Activated T-helper 2 cell treated with anti-CD3 and anti-CD28 coated beads, Interferon-gamma antibody, Interleukin-2, Interleukin-4, amounts not matched to agents 10 μg/mL and 5 μg/mL and 100 μg/mL, durations not matched to agents 14 hours and 24 hours and 36 hours (primary cell): ENCODE measurements at regions of chr6 and their contacts with region 1.

Region 1: DNA sequence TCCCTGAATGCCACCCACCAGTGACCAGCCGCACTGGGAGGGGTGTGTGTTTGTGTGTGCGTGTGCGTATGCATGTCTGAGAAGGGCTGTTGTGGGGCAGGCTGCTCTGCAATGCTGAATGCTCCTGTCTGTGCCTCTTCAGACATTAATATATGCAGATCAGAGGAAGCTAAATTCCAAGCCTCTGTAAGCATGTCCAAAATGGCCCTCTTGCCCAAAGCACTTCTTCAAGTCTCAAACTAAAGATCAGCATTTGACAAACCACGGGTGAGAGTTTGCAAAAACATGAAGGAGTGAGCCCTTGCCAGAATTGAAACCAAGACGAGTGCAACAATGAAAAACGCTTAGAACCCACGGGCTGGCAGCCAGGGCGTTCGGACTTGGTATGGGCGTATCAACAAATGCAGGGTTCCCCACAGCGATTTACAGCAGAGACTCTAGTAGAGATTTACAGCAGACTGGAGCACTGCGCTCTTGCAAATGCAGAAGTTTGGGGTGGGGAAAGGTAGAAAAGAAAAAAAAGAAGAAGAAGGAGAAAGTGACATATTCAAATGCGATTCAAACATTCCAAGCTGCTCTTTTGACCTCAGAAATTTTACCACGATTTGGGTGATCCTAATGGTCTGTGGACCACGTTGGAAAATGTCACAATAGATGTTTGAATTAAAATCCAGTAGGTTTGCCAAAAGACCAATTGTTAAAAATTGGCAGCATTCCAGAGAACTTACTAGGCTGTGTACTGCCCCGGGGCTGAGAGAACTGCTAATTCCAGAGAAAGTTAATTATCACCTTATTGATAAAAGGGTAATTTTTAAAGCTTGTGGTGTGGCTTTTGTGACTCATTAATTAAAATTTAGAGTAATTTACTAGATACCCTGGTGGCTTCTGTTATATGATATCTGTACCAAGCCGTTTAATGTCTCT is 3.5 kb downstream of the SCML4 start:
- DNase-seq: peak; percentile 26
- H3K4me3 Mint-ChIP-seq: peak overlapping the region; percentile 84
- H3K27ac Mint-ChIP-seq: peak overlapping the region; percentile 86
- H3K4me1 Mint-ChIP-seq: peaks cover 75% of the 10 kb centered on the region
- H3K27me3 Mint-ChIP-seq: no peaks in the 10 kb centered on the region

Region 2: GRCh38 chr6:107585815-107586435 is 234.7 kb before region 1 on chr6:
- intact Hi-C with region 1: no loop called
- DNase-seq: no peak
- H3K4me3 Mint-ChIP-seq: no peak overlapping the region
- H3K27ac Mint-ChIP-seq: no peak overlapping the region
- H3K4me1 Mint-ChIP-seq: no peaks in the 10 kb centered on the region
- H3K27me3 Mint-ChIP-seq: peaks cover 65% of the 10 kb centered on the region

Region 3: GRCh38 chr6:107645800-107646575 is 174.6 kb before region 1 on chr6:
- intact Hi-C with region 1: no loop called
- DNase-seq: no peak
- H3K4me3 Mint-ChIP-seq: no peak overlapping the region
- H3K27ac Mint-ChIP-seq: no peak overlapping the region
- H3K4me1 Mint-ChIP-seq: no peaks in the 10 kb centered on the region
- H3K27me3 Mint-ChIP-seq: peaks cover 30% of the 10 kb centered on the region

Region 4: DNA sequence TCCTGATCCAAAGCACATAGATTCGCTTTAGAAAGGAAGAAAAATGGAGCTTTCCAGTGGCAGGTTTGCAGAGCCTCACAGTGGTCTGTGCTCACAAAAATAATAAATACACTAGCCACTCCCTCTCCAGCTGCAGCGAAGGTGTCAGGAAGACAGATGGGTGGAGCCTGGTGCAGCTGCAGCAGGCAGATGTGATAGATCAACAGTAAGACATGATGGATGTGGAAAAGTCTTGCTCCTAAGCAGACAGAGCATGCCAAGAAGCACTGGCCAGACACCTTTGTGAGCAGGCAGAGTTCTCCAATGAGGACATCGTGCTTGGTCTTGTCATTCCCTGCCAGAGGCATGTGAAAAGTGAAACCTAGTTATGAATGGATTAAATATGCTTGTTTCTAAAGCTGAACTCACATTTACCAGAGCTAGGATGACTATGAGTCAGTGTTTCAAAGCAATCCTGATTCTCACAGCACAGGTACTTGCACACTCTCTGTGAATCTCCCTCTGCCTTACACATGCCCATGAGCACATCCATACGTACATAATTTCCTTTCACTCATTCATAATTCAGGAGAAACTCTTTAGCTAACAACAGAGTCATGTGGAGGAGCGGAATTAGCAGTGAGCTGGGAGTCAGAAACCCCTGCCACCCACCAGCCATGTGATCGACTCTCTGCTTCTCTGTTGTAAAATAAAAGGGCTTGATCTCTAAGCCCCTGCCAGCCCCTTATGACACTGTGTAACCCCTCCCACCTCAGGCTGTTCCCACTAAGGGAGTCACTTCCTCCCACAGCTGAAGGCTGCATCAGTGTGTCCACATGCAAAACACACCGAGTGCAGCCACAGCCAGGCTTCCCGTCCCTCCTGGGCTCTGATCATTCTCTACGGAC is 107.7 kb before region 1 on chr6:
- intact Hi-C with region 1: loop called (anchors 2 kb)
- DNase-seq: no peak
- H3K4me3 Mint-ChIP-seq: peak overlapping the region; percentile 34
- H3K27ac Mint-ChIP-seq: peak overlapping the region; percentile 64
- H3K4me1 Mint-ChIP-seq: peaks cover 43% of the 10 kb centered on the region
- H3K27me3 Mint-ChIP-seq: peaks cover 13% of the 10 kb centered on the region

Region 5: DNA sequence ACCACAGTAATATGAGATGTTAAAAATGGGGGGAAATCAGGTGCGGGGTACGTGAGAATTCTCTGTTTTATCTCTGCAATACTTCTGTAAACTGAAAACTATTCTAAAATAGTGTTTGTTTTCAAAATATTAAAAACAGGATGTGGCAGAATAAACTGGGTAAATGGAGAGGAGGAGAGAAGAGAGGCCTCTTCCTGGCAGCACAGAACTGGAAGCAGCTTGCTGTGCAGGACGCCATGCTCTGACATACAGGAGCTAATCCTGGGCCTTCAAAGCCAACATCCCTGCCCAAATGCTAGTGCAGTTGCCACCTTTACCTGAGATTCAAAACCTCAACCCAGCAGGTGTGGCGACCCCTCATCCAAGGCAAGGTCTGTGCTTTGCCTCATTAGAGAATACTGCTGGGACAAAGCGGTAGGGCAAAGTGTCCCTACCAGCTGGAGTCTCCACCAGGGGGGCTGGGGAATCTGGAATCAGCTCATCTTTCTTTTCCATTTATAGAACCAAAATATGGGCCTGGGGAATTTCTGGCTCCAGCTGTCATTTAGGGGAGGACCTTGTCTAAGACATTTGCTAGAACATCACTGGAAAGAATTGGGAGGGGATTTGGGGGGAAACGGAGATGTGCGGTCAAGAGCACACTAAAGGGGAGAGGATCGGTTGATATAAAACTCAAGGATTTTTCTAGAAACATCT is 63.8 kb before region 1 on chr6:
- intact Hi-C with region 1: no loop called
- DNase-seq: no peak
- H3K4me3 Mint-ChIP-seq: no peak overlapping the region
- H3K27ac Mint-ChIP-seq: no peak overlapping the region
- H3K4me1 Mint-ChIP-seq: peaks cover 22% of the 10 kb centered on the region
- H3K27me3 Mint-ChIP-seq: peaks cover 13% of the 10 kb centered on the region

Region 6: DNA sequence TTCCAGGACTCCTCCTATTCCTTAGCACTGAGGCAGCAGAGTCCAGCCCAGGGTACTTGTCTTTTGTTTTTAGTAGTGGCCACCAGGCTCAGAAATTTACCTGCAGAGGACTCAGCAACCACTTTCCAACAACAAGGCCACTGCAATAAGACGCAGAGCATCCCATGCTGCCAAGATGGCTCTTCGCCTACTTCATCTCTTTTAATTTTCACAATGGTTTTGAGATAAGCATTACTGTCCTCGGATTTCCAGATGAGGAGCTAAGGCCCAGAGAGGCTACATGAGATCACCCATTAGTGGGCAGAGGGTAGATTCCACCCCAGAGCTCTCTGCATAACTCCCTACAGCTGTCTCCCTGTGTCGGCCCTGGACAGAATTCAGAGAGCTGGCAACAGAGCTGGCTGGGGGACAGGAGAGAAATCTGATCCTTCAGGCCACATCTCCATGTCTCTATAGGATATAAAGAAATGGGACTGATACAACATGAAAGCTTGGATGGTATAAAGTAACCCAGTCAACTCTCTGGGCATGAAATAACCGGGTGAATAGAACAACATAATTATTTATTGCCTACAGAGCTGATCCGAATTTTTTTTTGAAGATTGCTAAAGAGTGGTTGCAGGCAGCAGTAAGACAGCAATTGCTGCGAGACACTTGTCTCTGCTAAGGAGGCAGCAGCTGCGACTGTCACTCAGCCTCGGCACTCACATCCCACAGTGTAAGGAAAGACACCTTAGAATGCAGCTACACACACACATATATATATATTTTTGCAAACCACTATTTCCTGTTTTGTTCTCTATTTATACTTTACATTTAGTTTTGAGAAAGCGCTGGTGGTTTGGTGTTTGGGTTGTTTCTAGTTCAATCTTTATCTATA is 33.7 kb before region 1 on chr6:
- intact Hi-C with region 1: loop called (anchors 2 kb)
- DNase-seq: peak; percentile 41
- H3K4me3 Mint-ChIP-seq: peak overlapping the region; percentile 60
- H3K27ac Mint-ChIP-seq: no peak overlapping the region
- H3K4me1 Mint-ChIP-seq: peaks cover 45% of the 10 kb centered on the region
- H3K27me3 Mint-ChIP-seq: peaks cover 7% of the 10 kb centered on the region

Region 7: DNA sequence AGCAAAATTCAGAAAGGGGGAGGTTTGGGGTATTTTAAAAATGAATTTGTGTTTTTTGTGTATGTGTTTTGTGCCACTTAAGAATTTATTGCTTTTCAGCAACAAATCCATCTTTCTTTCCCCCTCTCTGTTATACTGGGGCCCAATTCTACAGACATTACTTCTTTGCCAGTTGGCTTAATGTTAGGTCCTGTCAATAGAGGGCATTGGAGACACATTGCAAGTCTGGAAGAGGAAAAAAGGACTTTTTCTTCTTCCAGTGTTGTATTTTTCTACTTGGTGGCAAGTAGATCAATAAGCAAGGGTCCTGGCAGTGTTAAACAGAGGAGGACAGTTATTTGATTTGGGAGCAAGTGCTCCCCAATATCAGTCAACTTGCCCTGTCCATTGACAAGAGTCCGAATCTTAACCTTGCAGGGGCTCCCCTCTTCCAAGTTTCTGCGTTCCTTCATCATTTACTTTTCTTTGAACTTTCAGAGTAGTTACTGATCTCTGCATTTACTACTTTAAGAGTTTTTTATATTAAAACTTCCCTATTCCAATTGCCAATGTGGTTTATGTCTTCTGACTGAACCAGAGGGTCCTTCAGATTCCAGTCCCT is 19.9 kb before region 1 on chr6:
- intact Hi-C with region 1: loop called (anchors 2 kb)
- DNase-seq: no peak
- H3K4me3 Mint-ChIP-seq: no peak overlapping the region
- H3K27ac Mint-ChIP-seq: no peak overlapping the region
- H3K4me1 Mint-ChIP-seq: peaks cover 12% of the 10 kb centered on the region
- H3K27me3 Mint-ChIP-seq: peaks cover 20% of the 10 kb centered on the region

Region 8: DNA sequence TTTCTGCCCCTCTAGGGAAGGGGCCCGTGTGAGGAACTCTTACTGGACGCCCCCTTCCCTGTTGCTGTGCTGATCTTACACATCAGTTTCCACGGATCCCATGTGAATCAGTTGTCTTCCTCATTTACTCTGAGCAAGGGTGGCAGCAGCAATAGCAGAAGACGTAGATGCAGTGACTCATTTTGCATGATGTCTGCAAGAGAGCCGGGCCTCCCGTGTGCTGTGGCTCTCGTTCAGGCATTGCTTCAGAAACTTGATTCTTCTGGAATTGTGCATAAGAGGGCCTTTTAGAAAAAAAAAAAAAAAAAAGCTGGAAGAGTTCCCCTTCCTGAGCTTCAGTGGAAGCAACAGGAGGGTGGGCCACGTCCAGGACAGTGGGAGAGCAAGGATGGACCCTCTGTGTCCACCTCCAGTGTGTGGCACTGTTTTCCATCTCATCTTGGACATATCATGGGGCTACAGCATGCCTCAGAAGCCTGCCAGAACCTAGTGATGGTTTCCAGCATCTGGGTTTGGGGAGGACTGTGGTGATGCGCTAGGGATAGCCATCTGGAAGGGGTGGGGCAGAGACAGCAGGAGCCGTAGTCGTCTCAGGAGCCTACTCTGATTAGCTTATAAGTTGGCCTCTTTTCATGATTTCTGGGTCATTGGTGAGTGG is 802.2 kb after region 1 on chr6:
- intact Hi-C with region 1: no loop called
- DNase-seq: no peak
- H3K4me3 Mint-ChIP-seq: no peak overlapping the region
- H3K27ac Mint-ChIP-seq: no peak overlapping the region
- H3K4me1 Mint-ChIP-seq: peaks cover 10% of the 10 kb centered on the region
- H3K27me3 Mint-ChIP-seq: peaks cover 5% of the 10 kb centered on the region